CD4-positive, alpha-beta memory T cell (primary cell): ENCODE measurements at regions of chr7 and their contacts with region 1.

Region 1: GRCh38 chr7:44044315-44045225 is at the start of gene DBNL:
- DNase-seq: peak; percentile 79 to 91 (median 82)
- H3K4me3 ChIP-seq: peak within 1 kb of the TSS; percentile 89 to 94
- H3K4me3 Mint-ChIP-seq: peak within 1 kb of the TSS; percentile 89 to 96 (median 93)
- H3K27ac ChIP-seq: peak within 1 kb of the TSS; percentile 96
- H3K27ac Mint-ChIP-seq: peak within 1 kb of the TSS; percentile 94 to 98 (median 96)
- H3K4me1 ChIP-seq: peaks cover 57% of the 10 kb centered on the region
- H3K4me1 Mint-ChIP-seq: peaks cover 32 to 66% (median 50%) of the 10 kb centered on the region in 4 donors
- H3K27me3 ChIP-seq: no peaks in the 10 kb centered on the region
- H3K27me3 Mint-ChIP-seq: no peaks in the 10 kb centered on the region
- total RNA-seq, gene DBNL: 157 to 166 TPM

Region 2: DNA sequence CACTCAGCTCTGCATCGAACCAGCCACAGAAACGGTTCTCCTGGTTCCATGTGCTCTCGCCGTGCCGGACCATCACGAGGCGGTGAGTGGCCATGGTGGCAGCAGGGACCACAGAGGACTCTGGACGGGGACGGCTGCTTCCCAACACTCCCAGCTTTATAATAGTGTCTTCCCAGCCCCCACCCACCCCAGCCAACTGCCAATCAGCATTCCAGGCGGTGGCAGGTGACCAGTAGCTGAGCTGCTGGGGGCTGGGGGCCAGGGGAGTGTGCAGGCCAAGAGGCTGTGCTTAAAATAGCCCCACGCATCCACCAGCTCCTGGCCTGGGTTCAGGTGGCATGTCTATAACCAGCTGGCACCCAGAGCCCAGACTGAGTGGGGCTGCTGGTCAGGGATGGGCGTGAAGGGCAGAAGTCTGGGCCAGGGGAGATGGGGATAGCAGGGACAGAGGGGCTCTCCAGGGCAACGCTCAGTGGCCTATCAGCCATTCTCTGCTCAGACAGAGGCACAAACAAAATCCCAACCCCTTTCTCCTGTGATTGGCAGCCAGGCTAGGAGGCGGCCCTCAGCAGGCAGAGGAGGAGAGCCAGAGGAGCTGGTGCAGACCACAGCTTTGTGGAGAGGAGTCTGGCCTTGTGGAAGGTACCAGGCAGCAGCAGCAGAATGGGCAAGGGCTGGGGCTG is 21.0 kb after region 1 on chr7 and contains the start of gene PGAM2:
- CTCF ChIA-PET with region 1: interaction called, 4 read pairs
- POLR2A ChIA-PET with region 1: interaction called, 119 read pairs
- intact Hi-C with region 1: no loop called
- DNase-seq: no peak
- H3K4me3 ChIP-seq: no peak within 1 kb of the TSS
- H3K4me3 Mint-ChIP-seq: peak within 1 kb of the TSS in 1 of 8 donors; percentile 59
- H3K27ac ChIP-seq: no peak within 1 kb of the TSS
- H3K27ac Mint-ChIP-seq: peak within 1 kb of the TSS in 3 of 7 donors; percentile 61 to 85 (median 61)
- H3K4me1 ChIP-seq: peaks cover 20% of the 10 kb centered on the region
- H3K4me1 Mint-ChIP-seq: peaks cover 13 to 34% (median 22%) of the 10 kb centered on the region in 4 donors
- H3K27me3 ChIP-seq: no peaks in the 10 kb centered on the region
- H3K27me3 Mint-ChIP-seq: no peaks in the 10 kb centered on the region
- total RNA-seq, gene PGAM2: 1.1 to 1.5 TPM

Region 3: GRCh38 chr7:44218418-44219201 is 174.0 kb after region 1 on chr7:
- CTCF ChIA-PET with region 1: no interaction called
- POLR2A ChIA-PET with region 1: no interaction called
- intact Hi-C with region 1: no loop called
- DNase-seq: no peak
- H3K4me3 ChIP-seq: no peak overlapping the region
- H3K4me3 Mint-ChIP-seq: no peak overlapping the region
- H3K27ac ChIP-seq: no peak overlapping the region
- H3K27ac Mint-ChIP-seq: no peak overlapping the region
- H3K4me1 ChIP-seq: no peaks in the 10 kb centered on the region
- H3K4me1 Mint-ChIP-seq: no peaks in the 10 kb centered on the region
- H3K27me3 ChIP-seq: no peaks in the 10 kb centered on the region
- H3K27me3 Mint-ChIP-seq: peaks cover 0 to 3% of the 10 kb centered on the region in 2 donors

Region 4: GRCh38 chr7:44240983-44241510 is 196.5 kb after region 1 on chr7:
- CTCF ChIA-PET with region 1: no interaction called
- POLR2A ChIA-PET with region 1: no interaction called
- intact Hi-C with region 1: no loop called
- DNase-seq: peak; percentile 54 to 63 (median 57)
- H3K4me3 ChIP-seq: no peak overlapping the region
- H3K4me3 Mint-ChIP-seq: peak overlapping the region in 7 of 8 donors; percentile 25 to 64 (median 52)
- H3K27ac ChIP-seq: no peak overlapping the region
- H3K27ac Mint-ChIP-seq: peak overlapping the region in 3 of 7 donors; percentile 19 to 59 (median 41)
- H3K4me1 ChIP-seq: no peaks in the 10 kb centered on the region
- H3K4me1 Mint-ChIP-seq: no peaks in the 10 kb centered on the region
- H3K27me3 ChIP-seq: no peaks in the 10 kb centered on the region
- H3K27me3 Mint-ChIP-seq: no peaks in the 10 kb centered on the region